ENCODE measurements at regions of chr10 and their contacts with region 1.

Region 1: GRCh38 chr10:35126530-35127296 is at the start of gene CREM:
- DNase-seq: peak; percentile 79
- ATAC-seq: peak; percentile 78
- H3K4me3 ChIP-seq: peak within 1 kb of the TSS; percentile 81
- H3K27ac ChIP-seq: peak within 1 kb of the TSS; percentile 99
- H3K4me1 ChIP-seq: peaks cover 3% of the 10 kb centered on the region; the same call in 1 of the 2 replicates
- H3K27me3 ChIP-seq: no peaks in the 10 kb centered on the region
- CTCF ChIP-seq: peak; percentile 60 to 84 (median 81)
- EP300 ChIP-seq: peak; percentile 90 to 92; a peak in 3 of 4 replicates
- POLR2A ChIP-seq: peak; percentile 97
- RAD21 ChIP-seq: peak; percentile 91
- polyA plus RNA-seq, gene CREM: 64.2 to 70.7 TPM

Region 2: DNA sequence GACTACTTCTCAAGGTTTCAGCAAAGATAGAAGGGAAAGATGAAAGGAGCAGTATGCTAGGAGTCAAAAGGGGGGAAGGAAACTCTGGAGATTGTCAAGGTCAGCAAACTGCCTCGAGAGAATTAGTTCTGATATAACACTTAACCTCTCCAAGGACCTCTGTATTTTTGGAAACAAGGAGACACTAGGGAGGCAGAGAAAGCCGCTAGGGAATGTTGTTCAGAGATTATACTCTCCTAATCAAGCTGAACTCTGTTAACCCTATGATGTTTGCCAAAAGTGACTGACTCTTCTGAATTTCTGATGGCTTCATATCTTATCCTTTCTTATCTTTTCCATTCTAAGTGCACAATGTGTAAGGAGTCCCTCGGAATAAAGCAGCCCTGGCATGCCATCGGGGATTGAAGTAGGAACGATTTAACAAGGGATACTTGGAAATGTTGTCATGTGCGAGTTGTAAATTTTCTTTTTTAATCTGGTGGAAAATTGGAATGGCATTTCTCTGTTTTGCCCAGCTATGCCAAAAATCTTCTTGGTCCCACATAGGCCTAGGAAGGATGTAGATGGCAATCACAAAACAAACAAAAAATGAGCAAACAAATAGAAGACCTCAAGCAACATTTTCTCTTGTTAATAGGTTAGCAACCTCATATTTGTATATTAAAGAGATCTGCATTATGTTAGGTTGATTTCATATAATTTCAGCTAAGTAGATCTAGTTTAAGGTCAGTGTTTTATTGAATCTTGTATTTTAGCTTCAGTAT is 27.2 kb after region 1 on chr10:
- CTCF ChIA-PET with region 1: interaction called, 39 read pairs
- POLR2A ChIA-PET with region 1: interaction called, 13 read pairs
- RAD21 ChIA-PET with region 1: interaction called, 41 read pairs
- SMC1A ChIA-PET with region 1: interaction called, 50 read pairs
- in situ Hi-C with region 1: no loop called
- intact Hi-C with region 1: loop called (anchors 1 kb)
- DNase-seq: no peak
- ATAC-seq: no peak
- H3K4me3 ChIP-seq: no peak overlapping the region
- H3K27ac ChIP-seq: no peak overlapping the region
- H3K4me1 ChIP-seq: peaks cover 22% of the 10 kb centered on the region
- H3K27me3 ChIP-seq: no peaks in the 10 kb centered on the region
- CTCF ChIP-seq: no peak
- EP300 ChIP-seq: no peak
- POLR2A ChIP-seq: no peak
- RAD21 ChIP-seq: no peak

Region 3: GRCh38 chr10:35208536-35208935 is 81.8 kb after region 1 on chr10:
- CTCF ChIA-PET with region 1: interaction called, 378 read pairs
- POLR2A ChIA-PET with region 1: interaction called, 3 read pairs
- RAD21 ChIA-PET with region 1: interaction called, 66 read pairs
- SMC1A ChIA-PET with region 1: interaction called, 281 read pairs
- in situ Hi-C with region 1: no loop called
- intact Hi-C with region 1: no loop called
- DNase-seq: no peak
- ATAC-seq: peak; percentile 89
- H3K4me3 ChIP-seq: no peak overlapping the region
- H3K27ac ChIP-seq: peak overlapping the region; percentile 49
- H3K4me1 ChIP-seq: peaks cover 14% of the 10 kb centered on the region
- H3K27me3 ChIP-seq: no peaks in the 10 kb centered on the region
- CTCF ChIP-seq: no peak
- EP300 ChIP-seq: no peak
- POLR2A ChIP-seq: no peak
- RAD21 ChIP-seq: no peak

Region 4: DNA sequence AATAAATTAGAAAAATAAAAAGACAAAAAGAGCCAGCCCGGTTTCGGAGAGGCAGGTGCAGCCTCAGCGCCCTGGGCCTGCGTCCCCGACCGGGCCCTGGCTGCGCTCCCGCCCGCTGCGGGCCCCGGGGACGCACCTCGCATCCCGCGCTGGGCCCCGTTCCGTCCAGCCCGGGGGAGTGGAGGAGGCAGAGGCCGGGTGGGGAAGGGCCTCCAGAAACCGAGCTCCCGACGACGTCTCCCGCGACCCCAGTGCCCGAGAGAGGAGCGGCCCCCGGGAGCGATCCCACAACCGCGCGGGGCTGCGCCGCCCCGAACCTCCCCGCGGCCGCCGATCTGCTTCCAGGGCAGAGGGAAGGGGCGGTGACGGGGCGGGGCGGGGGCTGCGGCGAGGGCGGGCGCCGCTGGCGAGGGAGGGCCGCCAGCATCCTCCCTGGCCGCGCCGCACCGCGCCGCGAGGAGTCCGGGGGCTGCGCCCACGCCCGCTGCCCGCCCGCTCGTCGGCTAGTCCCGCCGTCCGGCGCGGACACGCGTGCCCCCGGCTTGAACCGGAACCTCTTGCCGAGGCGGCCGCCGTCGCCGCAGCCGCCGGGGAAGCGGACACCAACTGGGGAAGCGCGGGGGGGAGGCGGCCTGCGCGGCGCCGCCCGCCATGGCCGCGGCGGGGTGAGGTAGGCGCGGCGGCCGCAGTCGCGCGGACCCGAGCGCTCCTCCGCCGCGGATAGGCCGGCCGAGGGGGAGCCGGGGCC is 209.5 kb after region 1 on chr10 and contains the start of gene CCNY:
- CTCF ChIA-PET with region 1: no interaction called
- POLR2A ChIA-PET with region 1: interaction called, 3 read pairs
- RAD21 ChIA-PET with region 1: interaction called, 3 read pairs
- SMC1A ChIA-PET with region 1: no interaction called
- in situ Hi-C with region 1: loop called (anchors 10 kb)
- intact Hi-C with region 1: loop called (anchors 2 kb)
- DNase-seq: no peak
- ATAC-seq: peak; percentile 80
- H3K4me3 ChIP-seq: peak within 1 kb of the TSS; percentile 75
- H3K27ac ChIP-seq: peak within 1 kb of the TSS; percentile 51
- H3K4me1 ChIP-seq: peaks cover 15% of the 10 kb centered on the region
- H3K27me3 ChIP-seq: no peaks in the 10 kb centered on the region
- CTCF ChIP-seq: no peak
- EP300 ChIP-seq: 0 out of 4 replicates have a peak, but pooled peaks of 1 of the 2 experiments have one; percentile 6
- POLR2A ChIP-seq: peak; percentile 88
- RAD21 ChIP-seq: no peak
- polyA plus RNA-seq, gene CCNY: 6.5 to 7.7 TPM

Region 5: DNA sequence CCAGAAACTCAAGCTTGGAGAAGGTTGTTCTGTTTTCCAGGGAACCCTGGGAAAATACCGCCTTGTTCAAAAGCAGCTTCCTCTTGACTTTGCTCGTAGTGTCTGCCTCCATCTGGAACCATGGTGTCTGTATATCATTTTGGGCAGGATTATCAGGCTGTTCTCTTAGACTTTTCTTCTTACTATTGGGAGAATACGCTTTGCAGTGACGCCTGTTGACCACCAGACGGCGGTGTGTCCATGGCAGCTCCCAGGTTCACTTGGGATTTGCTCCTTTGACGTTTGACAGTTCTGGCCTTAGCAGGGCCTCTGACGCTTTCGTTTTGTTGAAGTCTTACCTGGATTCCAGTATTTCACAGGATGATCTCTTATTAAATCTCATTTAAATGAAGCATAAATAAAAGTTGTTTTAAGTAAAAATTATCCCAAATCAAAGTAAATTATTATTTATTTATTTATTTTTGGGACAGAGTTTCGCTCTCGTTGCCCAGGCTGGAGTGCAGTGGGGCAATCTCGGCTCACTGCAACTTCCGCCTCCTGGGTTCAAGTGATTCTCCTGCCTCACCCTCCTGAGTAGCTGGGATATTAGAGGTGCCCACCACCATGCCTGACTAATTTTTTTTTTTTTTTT is 436.7 kb after region 1 on chr10:
- CTCF ChIA-PET with region 1: interaction called, 23 read pairs
- POLR2A ChIA-PET with region 1: no interaction called
- RAD21 ChIA-PET with region 1: interaction called, 5 read pairs
- SMC1A ChIA-PET with region 1: interaction called, 6 read pairs
- in situ Hi-C with region 1: loop called (anchors 10 kb)
- intact Hi-C with region 1: loop called (anchors 10 kb)
- DNase-seq: peak; percentile 15
- ATAC-seq: peak; percentile 84
- H3K4me3 ChIP-seq: no peak overlapping the region
- H3K27ac ChIP-seq: no peak overlapping the region
- H3K4me1 ChIP-seq: peaks cover 8% of the 10 kb centered on the region
- H3K27me3 ChIP-seq: no peaks in the 10 kb centered on the region
- CTCF ChIP-seq: peak; percentile 90 to 100 (median 100)
- EP300 ChIP-seq: no peak
- POLR2A ChIP-seq: no peak
- RAD21 ChIP-seq: peak; percentile 71

Region 6: DNA sequence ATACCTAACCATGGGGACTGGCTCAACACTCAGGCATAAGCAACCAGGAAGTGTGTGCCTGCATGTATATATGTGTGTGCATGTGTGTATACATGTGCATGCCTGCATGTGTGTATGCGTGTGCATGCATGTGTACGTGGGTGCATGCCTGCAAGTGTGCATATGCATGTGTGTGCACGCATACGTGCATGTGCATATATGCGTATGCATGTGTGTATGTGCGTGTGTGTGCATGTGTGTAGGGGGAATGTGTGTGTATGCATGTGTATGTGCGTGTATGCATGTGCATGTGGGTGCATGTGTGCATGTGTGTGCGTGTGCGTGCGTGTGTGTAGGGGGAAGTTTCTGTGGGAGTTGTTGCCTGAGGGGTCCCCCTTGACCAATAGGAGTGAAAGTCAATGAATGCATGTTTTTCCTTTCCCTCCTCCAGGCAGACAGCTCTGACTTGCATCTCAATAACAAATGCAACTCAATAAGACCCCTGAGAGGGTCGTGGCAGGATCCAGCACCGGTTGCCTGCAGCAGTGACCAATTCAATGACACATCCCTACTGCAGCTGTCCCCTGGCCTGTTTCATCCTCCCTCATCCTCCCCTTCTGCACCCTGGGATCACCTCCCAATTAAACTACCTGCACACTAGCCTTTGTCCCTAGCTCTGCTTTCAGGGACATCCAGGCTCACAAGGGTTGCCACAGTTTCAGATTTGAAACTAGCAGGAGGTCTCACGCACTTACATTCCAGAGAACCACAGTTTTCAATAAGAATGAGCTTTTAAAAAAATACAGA is 542.3 kb after region 1 on chr10:
- CTCF ChIA-PET with region 1: no interaction called
- POLR2A ChIA-PET with region 1: no interaction called
- RAD21 ChIA-PET with region 1: no interaction called
- SMC1A ChIA-PET with region 1: no interaction called
- in situ Hi-C with region 1: no loop called
- intact Hi-C with region 1: no loop called
- DNase-seq: no peak
- ATAC-seq: no peak
- H3K4me3 ChIP-seq: no peak overlapping the region
- H3K27ac ChIP-seq: no peak overlapping the region
- H3K4me1 ChIP-seq: no peaks in the 10 kb centered on the region
- H3K27me3 ChIP-seq: no peaks in the 10 kb centered on the region
- CTCF ChIP-seq: no peak
- EP300 ChIP-seq: no peak
- POLR2A ChIP-seq: no peak
- RAD21 ChIP-seq: no peak